ENCODE measurements at regions of chr2 and their contacts with region 1.

Region 1: GRCh38 chr2:231612179-231613053 is 19.8 kb downstream of the TEX44 start:
- DNase-seq: peak; percentile 91 to 96 (median 94)
- H3K4me3 ChIP-seq: no peak overlapping the region
- H3K27ac ChIP-seq: peak overlapping the region; percentile 84 to 99
- H3K4me1 ChIP-seq: peaks cover 9% of the 10 kb centered on the region
- H3K27me3 ChIP-seq: no peaks in the 10 kb centered on the region
- CTCF ChIP-seq: peak; percentile 95 to 99 (median 99)
- EP300 ChIP-seq: peak; percentile 31
- POLR2A ChIP-seq: no peak

Region 2: GRCh38 chr2:231648587-231649174 is 36.3 kb after region 1 on chr2:
- intact Hi-C with region 1: no loop called
- DNase-seq: peak in 4 of 5 donors; percentile 56 to 65 (median 61)
- H3K4me3 ChIP-seq: no peak overlapping the region
- H3K27ac ChIP-seq: no peak overlapping the region
- H3K4me1 ChIP-seq: no peaks in the 10 kb centered on the region
- H3K27me3 ChIP-seq: no peaks in the 10 kb centered on the region
- CTCF ChIP-seq: peak in 1 of 3 donors; percentile 45
- EP300 ChIP-seq: no peak
- POLR2A ChIP-seq: no peak

Region 3: GRCh38 chr2:231662028-231662810 is 49.8 kb after region 1 on chr2:
- intact Hi-C with region 1: loop called in 1 of 4 experiments (anchors 2 kb)
- DNase-seq: peak; percentile 96 to 100 (median 98)
- H3K4me3 ChIP-seq: peak overlapping the region; percentile 47
- H3K27ac ChIP-seq: peak overlapping the region; percentile 69 to 85
- H3K4me1 ChIP-seq: peaks cover 5% of the 10 kb centered on the region
- H3K27me3 ChIP-seq: no peaks in the 10 kb centered on the region
- CTCF ChIP-seq: peak in 2 of 3 donors; percentile 19 to 44
- EP300 ChIP-seq: peak; percentile 4
- POLR2A ChIP-seq: peak; percentile 94

Region 4: DNA sequence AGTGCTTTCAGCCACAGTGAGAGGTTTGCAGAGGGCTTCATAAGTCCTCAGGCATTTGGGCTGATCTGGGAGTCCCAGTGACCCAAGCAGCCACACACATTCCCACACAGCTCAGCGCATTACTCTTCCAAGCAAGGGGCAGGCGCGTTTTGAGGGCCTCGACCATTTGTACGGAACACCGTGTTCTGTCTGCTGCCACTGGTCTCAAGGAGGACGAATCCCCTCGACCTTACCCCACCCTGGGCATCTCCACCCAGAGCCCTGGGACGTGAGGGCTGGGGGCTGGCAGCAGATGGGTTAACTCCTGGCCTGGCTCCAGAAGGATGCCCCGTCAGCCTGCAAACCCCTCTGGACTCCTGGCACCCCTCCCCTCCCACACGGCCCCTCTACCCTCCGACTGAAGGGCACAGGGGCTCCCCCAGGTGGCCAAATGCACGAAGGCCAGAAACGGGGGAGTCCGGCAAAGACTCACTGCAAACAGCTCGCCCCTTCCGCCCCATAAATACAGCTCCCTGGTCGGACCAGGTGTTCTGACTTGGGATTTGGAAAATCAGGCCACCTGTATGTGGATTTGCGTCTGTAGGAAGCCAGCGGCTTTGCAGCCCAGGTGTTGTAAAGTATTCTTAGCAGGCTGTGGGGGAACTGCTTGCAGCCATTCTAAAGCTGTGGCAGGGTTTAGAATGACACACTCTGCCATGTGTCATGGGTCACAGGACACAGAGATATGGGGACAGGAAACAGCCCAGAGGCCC is 62.3 kb after region 1 on chr2:
- intact Hi-C with region 1: loop called (anchors 2 to 5 kb)
- DNase-seq: peak; percentile 65 to 83 (median 75)
- H3K4me3 ChIP-seq: no peak overlapping the region
- H3K27ac ChIP-seq: peak overlapping the region in 1 of 2 donors; percentile 36
- H3K4me1 ChIP-seq: peaks cover 3% of the 10 kb centered on the region
- H3K27me3 ChIP-seq: no peaks in the 10 kb centered on the region
- CTCF ChIP-seq: peak; percentile 60 to 91 (median 74)
- EP300 ChIP-seq: no peak
- POLR2A ChIP-seq: no peak

Region 5: GRCh38 chr2:231706731-231707624 is 94.6 kb after region 1 on chr2:
- intact Hi-C with region 1: loop called in 3 of 4 experiments (anchors 2 kb)
- DNase-seq: peak; percentile 98 to 99 (median 98)
- H3K4me3 ChIP-seq: peak overlapping the region; percentile 81
- H3K27ac ChIP-seq: peak overlapping the region; percentile 100
- H3K4me1 ChIP-seq: peaks cover 12% of the 10 kb centered on the region
- H3K27me3 ChIP-seq: no peaks in the 10 kb centered on the region
- CTCF ChIP-seq: peak; percentile 81 to 95 (median 86)
- EP300 ChIP-seq: peak; percentile 3
- POLR2A ChIP-seq: peak; percentile 95

Region 6: GRCh38 chr2:231713730-231714430 is 101.5 kb after region 1 on chr2:
- intact Hi-C with region 1: loop called (anchors 2 kb)
- DNase-seq: peak; percentile 80 to 92 (median 88)
- H3K4me3 ChIP-seq: no peak overlapping the region
- H3K27ac ChIP-seq: no peak overlapping the region
- H3K4me1 ChIP-seq: peaks cover 18% of the 10 kb centered on the region
- H3K27me3 ChIP-seq: no peaks in the 10 kb centered on the region
- CTCF ChIP-seq: peak; percentile 84 to 91 (median 90)
- EP300 ChIP-seq: no peak
- POLR2A ChIP-seq: no peak

Region 7: DNA sequence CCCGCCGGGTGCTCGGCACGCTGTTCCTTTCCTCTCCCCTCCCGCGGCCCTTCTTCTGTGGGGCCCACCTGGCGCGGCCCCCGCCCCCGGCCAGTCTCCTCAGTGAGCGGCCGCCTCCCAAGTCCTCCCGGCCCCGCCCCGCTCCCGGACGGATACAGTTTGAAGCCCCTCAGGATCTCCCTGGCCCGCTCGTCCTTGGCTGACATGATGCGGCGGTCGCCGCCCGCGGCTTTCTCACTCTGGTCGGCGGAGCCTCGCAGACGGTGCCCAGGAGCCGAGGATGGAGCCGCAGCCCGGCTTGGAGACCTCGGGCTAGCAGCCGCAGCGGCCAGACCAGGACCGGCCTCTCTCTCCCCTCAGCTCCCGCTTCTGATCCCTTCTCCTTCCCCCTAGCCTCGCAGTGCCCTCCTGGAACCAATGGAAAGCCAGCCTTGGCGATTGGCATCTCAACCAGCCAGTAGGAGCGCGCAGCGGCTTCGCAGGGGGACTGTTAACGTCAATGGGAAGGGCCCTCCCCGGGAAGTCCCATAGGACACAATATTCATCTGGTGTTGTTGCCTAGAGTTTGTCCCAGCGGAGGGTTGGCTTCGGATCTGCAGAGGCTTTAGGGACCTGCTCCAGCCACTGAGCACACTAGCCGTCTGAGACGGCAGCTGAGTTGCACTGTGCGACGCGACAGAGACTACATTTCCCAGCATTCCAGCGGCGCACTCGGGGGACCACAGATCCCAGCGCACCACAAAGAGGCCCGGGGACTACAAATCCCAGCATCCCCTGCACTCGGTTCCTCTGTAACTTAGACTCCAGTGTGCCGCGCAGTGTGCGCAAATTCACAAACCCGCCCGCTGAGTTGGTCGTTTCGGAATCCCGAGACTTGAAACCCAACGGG is 168.7 kb after region 1 on chr2 and contains the start of gene PDE6D:
- intact Hi-C with region 1: loop called in 1 of 4 experiments (anchors 5 kb)
- DNase-seq: peak; percentile 97 to 99 (median 98)
- H3K4me3 ChIP-seq: peak within 1 kb of the TSS; percentile 83
- H3K27ac ChIP-seq: peak within 1 kb of the TSS; percentile 43 to 69
- H3K4me1 ChIP-seq: peaks cover 8% of the 10 kb centered on the region
- H3K27me3 ChIP-seq: no peaks in the 10 kb centered on the region
- CTCF ChIP-seq: no peak
- EP300 ChIP-seq: no peak
- POLR2A ChIP-seq: peak; percentile 84
- total RNA-seq, gene PDE6D: 13.7 to 22.9 (median 16.9) TPM

Region 8: GRCh38 chr2:232550354-232551249 is 938.2 kb after region 1 on chr2 and contains the starts of genes EIF4E2 and TIGD1:
- intact Hi-C with region 1: no loop called
- DNase-seq: peak; percentile 90 to 95 (median 92)
- H3K4me3 ChIP-seq: peak within 1 kb of the TSS; percentile 99
- H3K27ac ChIP-seq: peak within 1 kb of the TSS; percentile 48 to 82
- H3K4me1 ChIP-seq: peaks cover 2% of the 10 kb centered on the region
- H3K27me3 ChIP-seq: no peaks in the 10 kb centered on the region
- CTCF ChIP-seq: peak in 2 of 3 donors; percentile 50 to 51
- EP300 ChIP-seq: no peak
- POLR2A ChIP-seq: peak; percentile 53
- total RNA-seq, gene EIF4E2: 18.6 to 47.6 (median 42.8) TPM
- total RNA-seq, gene TIGD1: 4.3 to 9.7 (median 7.6) TPM